ENCODE measurements at regions of chr9 and their contacts with region 1.

Region 1: GRCh38 chr9:128438343-128439109 is 17.3 kb upstream of the ODF2 start:
- DNase-seq: peak; percentile 87
- ATAC-seq: peak; percentile 98
- H3K4me3 Mint-ChIP-seq: no peak overlapping the region
- H3K27ac Mint-ChIP-seq: peak overlapping the region; percentile 28
- H3K4me1 Mint-ChIP-seq: peaks cover 8% of the 10 kb centered on the region
- H3K27me3 Mint-ChIP-seq: no peaks in the 10 kb centered on the region

Region 2: DNA sequence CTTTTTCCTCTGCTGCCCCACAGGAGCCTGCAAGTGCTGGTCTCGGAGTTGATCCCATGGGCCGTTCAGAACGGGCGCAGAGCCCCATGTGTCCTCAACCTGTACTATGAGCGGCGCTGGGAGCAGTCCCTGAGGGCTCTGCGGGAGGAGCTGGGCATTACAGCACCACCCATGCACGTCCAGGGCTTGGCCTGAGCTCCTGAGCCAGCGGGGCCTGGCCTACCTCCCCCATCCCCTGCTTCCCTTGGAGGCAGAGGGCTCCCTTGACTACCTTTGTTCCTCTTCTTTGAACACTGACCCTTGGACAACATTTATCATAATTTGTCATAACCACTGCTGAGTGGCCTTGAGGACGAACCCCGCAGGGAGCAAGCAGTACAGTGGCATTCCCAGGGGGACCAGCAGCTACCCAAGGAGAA is 105.1 kb before region 1 on chr9:
- CTCF ChIA-PET with region 1: no interaction called
- DNase-seq: no peak
- ATAC-seq: no peak
- H3K4me3 Mint-ChIP-seq: no peak overlapping the region
- H3K27ac Mint-ChIP-seq: no peak overlapping the region
- H3K4me1 Mint-ChIP-seq: no peaks in the 10 kb centered on the region
- H3K27me3 Mint-ChIP-seq: no peaks in the 10 kb centered on the region

Region 3: GRCh38 chr9:128448746-128449145 is 10.2 kb after region 1 on chr9:
- CTCF ChIA-PET with region 1: interaction called, 16 read pairs
- DNase-seq: no peak
- ATAC-seq: no peak
- H3K4me3 Mint-ChIP-seq: no peak overlapping the region
- H3K27ac Mint-ChIP-seq: no peak overlapping the region
- H3K4me1 Mint-ChIP-seq: no peaks in the 10 kb centered on the region
- H3K27me3 Mint-ChIP-seq: peaks cover 6% of the 10 kb centered on the region

Region 4: DNA sequence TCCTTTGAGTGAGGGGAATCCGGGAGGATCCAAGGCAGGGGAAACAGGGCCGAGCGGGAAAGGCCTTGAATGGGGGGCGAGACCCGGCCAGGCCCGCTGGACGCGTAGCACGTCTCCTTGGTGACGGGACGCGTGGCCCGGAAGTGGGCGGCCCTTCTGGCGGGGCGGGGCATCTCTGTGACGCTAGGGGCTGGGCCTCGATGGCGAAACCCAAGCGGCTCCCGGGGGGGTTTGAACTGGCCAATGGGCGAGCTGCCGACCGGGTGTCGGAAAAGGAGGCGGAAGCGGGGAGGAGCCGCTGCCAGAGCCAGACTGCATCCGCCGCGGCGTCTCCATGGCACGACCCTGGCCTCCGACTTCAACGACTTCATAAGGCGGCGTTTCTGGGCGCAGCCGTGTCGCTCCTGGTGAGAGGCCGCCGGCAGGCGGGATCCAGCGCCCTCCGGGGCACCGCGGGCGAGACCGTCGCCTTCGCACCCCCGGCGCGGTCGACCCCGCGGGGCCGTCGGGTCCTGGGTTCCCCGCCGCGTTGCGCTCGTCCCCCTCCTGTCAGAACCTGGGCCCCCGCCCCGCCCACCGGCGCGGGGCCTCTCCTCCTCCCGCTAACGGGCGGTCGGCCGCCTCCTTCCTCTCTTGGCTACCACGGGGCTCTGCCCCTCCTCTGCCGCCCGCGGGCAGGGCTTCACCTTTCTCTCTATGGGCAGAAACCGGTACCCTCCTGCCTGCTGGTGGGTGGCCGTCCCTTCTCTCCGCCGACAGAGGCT is 17.5 kb after region 1 on chr9 and contains the start of gene ODF2:
- CTCF ChIA-PET with region 1: interaction called, 11 read pairs
- DNase-seq: peak; percentile 99
- ATAC-seq: peak; percentile 90
- H3K4me3 Mint-ChIP-seq: peak within 1 kb of the TSS; percentile 85
- H3K27ac Mint-ChIP-seq: peak within 1 kb of the TSS; percentile 89
- H3K4me1 Mint-ChIP-seq: peaks cover 21% of the 10 kb centered on the region
- H3K27me3 Mint-ChIP-seq: no peaks in the 10 kb centered on the region
- total RNA-seq, gene ODF2: 71.8 to 82.7 TPM

Region 5: DNA sequence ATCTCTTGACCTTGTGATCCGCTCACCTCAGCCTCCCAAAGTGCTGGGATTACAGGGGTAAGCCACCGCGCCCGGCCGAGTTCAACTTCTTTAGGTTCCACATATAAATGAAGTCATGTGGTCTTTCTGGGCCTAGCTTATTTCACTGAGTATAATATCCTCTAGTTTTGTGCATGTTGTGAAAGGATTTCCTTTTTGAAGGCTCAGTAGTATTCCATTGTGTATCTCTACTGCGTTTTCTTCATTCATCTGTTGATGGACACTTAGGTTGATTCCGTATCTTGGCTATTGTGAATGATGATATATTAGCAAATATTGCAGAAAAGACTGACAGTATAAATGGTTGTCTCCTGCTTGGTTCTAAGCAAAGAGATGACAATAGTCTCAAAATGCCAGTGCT is 37.3 kb after region 1 on chr9:
- CTCF ChIA-PET with region 1: no interaction called
- DNase-seq: no peak
- ATAC-seq: no peak
- H3K4me3 Mint-ChIP-seq: no peak overlapping the region
- H3K27ac Mint-ChIP-seq: no peak overlapping the region
- H3K4me1 Mint-ChIP-seq: no peaks in the 10 kb centered on the region
- H3K27me3 Mint-ChIP-seq: no peaks in the 10 kb centered on the region

Measured in activated CD8-positive, alpha-beta memory T cell treated with anti-CD3 and anti-CD28 coated beads, Interleukin-2, amount 10 ng/mL, durations not matched to agents 7 days and 5 days (primary cell).